AG04450 (cell line): ENCODE measurements at regions of chr9 and their contacts with region 1.

Region 1: DNA sequence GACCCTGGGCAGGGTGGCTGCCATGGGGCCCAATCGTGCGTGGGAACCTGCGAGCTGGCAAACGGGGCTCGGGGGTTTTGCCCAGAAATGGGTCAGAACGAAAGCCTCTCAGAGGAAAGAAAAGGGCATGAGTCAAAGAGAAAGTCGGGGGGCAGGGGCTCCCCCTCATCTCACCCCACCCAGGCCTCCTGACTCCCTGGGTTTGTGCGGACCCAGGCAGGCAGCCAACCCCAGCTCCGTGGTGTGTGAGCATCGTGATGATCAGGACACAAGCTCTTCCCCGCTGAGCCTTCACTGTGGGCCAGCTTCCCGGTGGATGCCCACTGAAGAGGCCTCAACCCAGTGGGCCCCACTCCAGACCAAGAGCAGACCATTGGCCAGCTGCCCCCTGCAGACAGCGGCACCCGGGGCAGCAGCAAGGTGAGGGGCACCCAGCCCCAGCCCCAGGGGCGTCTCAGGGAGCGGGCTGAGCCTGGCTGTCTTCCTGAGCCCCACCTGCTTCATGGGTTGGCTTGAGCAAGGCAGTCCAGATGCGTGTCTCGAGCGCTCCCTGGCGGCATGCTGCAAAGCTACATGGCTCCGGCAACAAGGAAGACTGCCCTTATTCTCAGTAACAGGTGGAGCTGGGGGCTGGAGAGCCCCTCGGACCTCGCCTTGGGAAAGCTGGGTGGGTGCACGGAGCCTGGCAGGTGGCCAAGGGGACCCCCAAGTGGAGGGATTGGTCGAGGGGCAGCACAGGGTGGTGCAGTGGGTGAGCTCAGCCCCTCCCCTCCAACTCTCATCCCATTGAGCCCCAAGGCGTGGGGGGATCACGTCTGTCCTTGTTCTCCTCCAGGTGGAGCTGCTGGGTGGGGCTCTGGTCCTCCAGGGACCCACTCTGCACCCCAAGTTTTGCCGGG is 3.2 kb upstream of the FUT7 start:
- DNase-seq: peak; percentile 63
- H3K4me3 ChIP-seq: no peak overlapping the region
- H3K27ac ChIP-seq: no peak overlapping the region
- H3K27me3 ChIP-seq: no peaks in the 10 kb centered on the region
- CTCF ChIP-seq: peak; percentile 93

Region 2: GRCh38 chr9:136791642-136792276 is 243.4 kb before region 1 on chr9:
- CTCF ChIA-PET with region 1: interaction called, 31 read pairs
- POLR2A ChIA-PET with region 1: interaction called, 3 read pairs
- DNase-seq: no peak
- H3K4me3 ChIP-seq: peak overlapping the region; percentile 91
- H3K27ac ChIP-seq: peak overlapping the region; percentile 57
- H3K27me3 ChIP-seq: peaks cover 9% of the 10 kb centered on the region
- CTCF ChIP-seq: peak; percentile 93

Region 3: GRCh38 chr9:136944519-136945279 is 90.4 kb before region 1 on chr9 and contains the starts of genes C8G and FBXW5:
- CTCF ChIA-PET with region 1: interaction called, 105 read pairs
- POLR2A ChIA-PET with region 1: interaction called, 10 read pairs
- DNase-seq: peak; percentile 74
- H3K4me3 ChIP-seq: peak within 1 kb of the TSS; percentile 78
- H3K27ac ChIP-seq: peak within 1 kb of the TSS; percentile 61
- H3K27me3 ChIP-seq: no peaks in the 10 kb centered on the region
- CTCF ChIP-seq: peak; percentile 86
- polyA plus RNA-seq, gene C8G: 0.41 TPM in 1 of 2 replicates, not detected in the other
- polyA plus RNA-seq, gene FBXW5: 31.2 and 46.4 TPM in 2 replicates

Region 4: GRCh38 chr9:137046098-137046787 is 11.1 kb after region 1 on chr9 and contains the start of gene NPDC1:
- CTCF ChIA-PET with region 1: interaction called, 16 read pairs
- POLR2A ChIA-PET with region 1: no interaction called
- DNase-seq: no peak
- H3K4me3 ChIP-seq: peak within 1 kb of the TSS; percentile 68
- H3K27ac ChIP-seq: no peak within 1 kb of the TSS
- H3K27me3 ChIP-seq: peaks cover 29% of the 10 kb centered on the region
- CTCF ChIP-seq: peak; percentile 87
- polyA plus RNA-seq, gene NPDC1: 8.9 and 16.5 TPM in 2 replicates

Region 5: DNA sequence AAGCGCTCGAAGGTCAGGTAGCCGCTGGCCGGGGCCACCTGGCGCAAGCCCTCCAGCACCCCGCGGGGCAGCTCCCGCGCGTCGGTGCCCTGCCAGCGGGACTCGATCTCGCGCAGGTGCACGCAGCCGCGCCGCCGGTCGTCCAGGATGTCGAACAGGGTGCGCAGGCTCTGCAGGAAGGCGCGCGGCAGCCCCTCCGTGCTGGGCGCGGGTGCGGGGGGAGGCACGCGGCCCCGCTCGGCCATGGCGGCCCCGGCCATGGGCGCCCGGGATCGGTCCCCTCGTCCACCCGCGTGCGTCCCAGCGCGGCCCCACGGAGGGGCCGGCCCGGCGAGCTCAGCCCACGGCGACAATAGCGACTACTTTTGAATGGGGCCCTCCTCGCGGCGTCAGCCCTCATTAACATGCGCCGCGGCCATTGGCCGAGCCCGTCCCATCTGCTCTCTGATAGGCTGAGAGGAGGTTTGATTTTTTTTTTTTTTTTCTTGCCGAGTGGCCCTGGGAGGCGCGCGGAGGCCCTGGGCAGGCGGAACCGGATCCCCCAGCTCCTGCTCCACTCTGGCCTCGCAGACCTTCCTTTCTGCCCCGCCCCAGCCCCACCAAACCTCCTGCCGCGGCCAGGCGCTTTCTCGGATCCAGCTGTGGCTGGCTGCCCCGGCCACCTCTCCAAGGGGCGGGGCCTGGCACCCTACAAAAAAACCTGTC is 35.2 kb after region 1 on chr9 and contains the start of gene SAPCD2:
- CTCF ChIA-PET with region 1: interaction called, 13 read pairs
- POLR2A ChIA-PET with region 1: no interaction called
- DNase-seq: peak; percentile 42
- H3K4me3 ChIP-seq: peak within 1 kb of the TSS; percentile 48
- H3K27ac ChIP-seq: no peak within 1 kb of the TSS
- H3K27me3 ChIP-seq: no peaks in the 10 kb centered on the region
- CTCF ChIP-seq: no peak
- polyA plus RNA-seq, gene SAPCD2: 1.5 and 1.8 TPM in 2 replicates